ENCODE measurements at regions of chr1 and their contacts with region 1.

Region 1: GRCh38 chr1:26602378-26602959 is 72.9 kb downstream of the RPS6KA1 start:
- DNase-seq: no peak
- H3K4me3 ChIP-seq: no peak overlapping the region
- CTCF ChIP-seq: peak; percentile 47

Region 2: GRCh38 chr1:26472901-26473845 is 129.3 kb before region 1 on chr1:
- CTCF ChIA-PET with region 1: no interaction called
- POLR2A ChIA-PET with region 1: no interaction called
- DNase-seq: peak; percentile 57
- H3K4me3 ChIP-seq: peak overlapping the region; percentile 77
- CTCF ChIP-seq: no peak

Region 3: DNA sequence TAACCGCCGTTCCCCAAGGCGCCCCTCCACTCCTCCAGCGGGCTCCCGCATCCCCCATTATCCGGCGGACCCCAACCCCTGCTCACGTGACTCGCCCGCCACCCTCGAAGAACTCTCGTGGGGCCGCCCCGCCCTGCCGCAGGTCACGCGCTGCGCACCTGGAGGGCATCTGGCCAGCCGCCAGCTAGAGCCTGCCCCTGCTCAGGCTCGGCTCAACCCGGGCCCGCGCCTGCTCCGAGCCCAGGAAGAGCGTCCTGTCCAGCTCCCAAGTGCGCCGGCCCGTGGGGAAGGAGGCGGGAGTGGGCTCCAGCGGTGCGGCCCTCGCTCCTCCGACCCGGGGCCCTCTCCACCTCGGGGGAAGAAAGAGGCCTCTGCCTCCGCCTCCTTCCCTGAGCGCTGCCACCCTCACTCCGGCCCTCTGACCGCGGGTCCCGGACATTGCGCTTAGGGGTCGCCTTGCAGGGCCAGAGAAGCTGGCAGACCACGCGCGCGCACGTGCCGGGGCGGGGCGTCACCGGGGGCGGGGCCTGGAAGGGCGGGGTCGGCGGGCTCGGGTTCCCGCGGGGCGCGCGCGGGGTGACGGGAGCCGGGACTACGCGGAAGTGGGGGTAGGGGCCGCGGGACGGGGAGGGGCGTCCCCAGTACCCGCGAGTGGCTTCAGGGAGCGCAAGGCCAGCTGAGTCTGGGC is 101.8 kb before region 1 on chr1:
- CTCF ChIA-PET with region 1: interaction called, 11 read pairs
- POLR2A ChIA-PET with region 1: interaction called, 3 read pairs
- DNase-seq: no peak
- H3K4me3 ChIP-seq: peak overlapping the region; percentile 76
- CTCF ChIP-seq: no peak

Region 4: DNA sequence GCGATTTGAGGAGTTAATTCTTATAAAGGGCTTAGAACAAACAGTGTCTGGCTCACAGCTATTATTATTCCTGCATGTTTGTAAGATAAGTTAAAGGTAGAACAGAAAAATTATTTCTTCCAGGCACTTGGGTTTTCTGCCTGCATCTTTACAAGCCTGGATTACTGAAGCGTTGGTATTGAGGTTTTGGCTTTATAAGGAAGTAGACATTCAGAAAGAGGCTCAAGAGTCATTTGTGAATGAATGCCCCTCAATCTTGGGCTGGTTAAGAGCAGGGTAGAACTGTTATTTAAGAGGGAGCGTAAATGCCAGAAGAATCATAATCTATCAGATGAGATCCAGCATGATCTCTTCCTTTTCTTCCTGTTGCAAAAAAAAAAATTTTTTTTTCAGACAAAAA is 16.1 kb after region 1 on chr1:
- CTCF ChIA-PET with region 1: no interaction called
- POLR2A ChIA-PET with region 1: no interaction called
- DNase-seq: no peak
- H3K4me3 ChIP-seq: no peak overlapping the region
- CTCF ChIP-seq: no peak

Region 5: GRCh38 chr1:26700711-26701110 is 98.2 kb after region 1 on chr1:
- CTCF ChIA-PET with region 1: interaction called, 23 read pairs
- POLR2A ChIA-PET with region 1: no interaction called
- DNase-seq: no peak
- H3K4me3 ChIP-seq: no peak overlapping the region; the same call in 1 of the 2 replicates
- CTCF ChIP-seq: no peak

Region 6: GRCh38 chr1:26799479-26800142 is 197.1 kb after region 1 on chr1:
- CTCF ChIA-PET with region 1: interaction called, 167 read pairs
- POLR2A ChIA-PET with region 1: no interaction called
- DNase-seq: no peak
- H3K4me3 ChIP-seq: peak overlapping the region; percentile 24; the same call in 1 of the 2 replicates
- CTCF ChIP-seq: peak; percentile 9

Region 7: DNA sequence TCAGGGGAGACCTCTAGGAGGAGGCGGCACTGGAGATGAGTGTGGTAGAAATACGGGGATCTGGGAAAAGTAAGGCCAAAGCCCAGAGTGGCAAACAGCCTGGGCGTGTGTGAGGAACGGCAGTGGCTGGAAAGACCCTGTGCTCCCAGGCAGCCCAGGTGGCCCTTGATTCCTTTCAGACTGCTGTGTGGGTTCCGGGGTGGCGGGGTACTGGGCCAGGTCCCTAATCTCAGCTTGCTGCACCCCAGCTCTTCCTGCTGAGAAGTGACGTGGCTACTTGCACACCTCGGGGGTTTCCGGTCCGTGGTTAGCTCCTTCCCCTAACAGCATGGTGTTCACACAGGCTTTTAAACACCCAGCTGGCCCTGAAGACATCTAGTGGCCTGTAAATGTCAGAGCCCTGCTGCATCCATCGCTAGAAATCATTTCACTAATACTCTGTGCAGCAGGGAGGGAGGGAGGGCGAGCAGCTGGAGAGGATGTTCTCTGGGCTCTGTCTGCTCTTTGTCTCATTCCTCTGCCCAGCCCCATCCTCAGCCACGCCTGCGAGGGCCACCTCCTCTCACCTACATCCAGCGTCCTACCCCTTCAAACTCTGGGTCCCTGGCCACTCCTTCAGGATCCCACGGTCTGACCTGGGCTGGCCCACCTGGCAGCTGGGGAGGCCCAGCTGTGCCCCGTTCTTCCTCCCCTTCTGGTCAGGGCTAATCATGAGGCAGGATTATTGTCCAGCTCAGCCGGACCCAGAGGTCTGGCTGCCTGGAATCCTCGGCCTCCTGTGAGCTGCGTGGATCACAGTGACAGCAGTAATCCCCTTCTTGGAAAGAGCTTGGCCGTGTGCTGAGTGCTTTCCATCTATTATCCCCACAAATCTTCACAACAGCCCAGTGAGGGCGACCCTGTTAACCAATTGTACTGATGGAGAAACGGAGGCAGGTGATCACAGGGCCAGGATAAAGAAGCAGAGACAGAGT is 231.2 kb after region 1 on chr1:
- CTCF ChIA-PET with region 1: interaction called, 15 read pairs
- POLR2A ChIA-PET with region 1: no interaction called
- DNase-seq: no peak
- H3K4me3 ChIP-seq: no peak overlapping the region
- CTCF ChIP-seq: no peak

Region 8: DNA sequence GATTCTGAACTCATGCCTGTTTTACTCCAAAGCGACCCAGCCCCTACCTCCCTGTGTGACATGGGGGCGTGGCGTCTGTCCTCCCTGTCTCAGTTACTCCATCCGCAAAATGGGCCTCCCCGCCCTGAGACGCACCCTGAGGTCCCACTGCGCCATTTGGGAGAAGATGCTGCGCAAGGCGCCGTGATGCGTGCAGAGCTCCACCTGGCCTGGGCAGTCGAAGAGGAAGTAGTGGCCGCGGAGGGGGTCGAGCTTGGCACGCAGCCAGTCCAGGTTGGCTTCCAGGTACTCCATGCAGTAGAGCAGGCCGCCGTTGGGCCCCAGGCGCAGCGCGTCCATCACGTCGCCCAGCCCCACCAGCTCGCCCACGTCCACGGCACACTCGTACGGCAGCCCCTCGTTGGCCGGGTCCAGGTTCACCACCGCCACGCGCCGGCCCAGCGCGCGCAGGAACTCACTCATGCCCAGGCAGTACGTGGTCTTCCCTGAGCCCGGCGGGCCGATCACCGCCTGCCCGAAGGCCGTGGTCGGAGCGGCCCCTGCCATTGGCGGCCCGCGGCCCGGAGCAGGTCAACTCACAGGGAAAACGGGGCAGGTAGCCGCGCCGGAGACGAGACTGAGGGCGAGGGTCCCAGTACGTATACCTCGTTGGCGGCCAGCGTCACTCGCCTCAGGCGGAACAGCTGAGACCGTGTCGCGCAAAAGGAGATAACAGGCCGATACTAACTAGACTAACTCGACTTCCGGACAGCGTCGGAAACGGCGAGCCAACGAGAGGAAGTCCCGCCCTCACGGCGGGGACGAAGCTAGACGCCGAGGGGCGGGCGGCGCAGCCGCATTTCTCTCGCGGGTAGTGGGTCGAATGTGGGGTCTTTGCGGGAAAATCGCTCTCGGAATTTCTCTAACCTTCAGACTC is 287.3 kb after region 1 on chr1 and contains the start of gene GPN2:
- CTCF ChIA-PET with region 1: interaction called, 37 read pairs
- POLR2A ChIA-PET with region 1: no interaction called
- DNase-seq: peak; percentile 21
- H3K4me3 ChIP-seq: peak within 1 kb of the TSS; percentile 98
- CTCF ChIP-seq: no peak

Measured in AG04449 (cell line).